ENCODE measurements at regions of chr21 and their contacts with region 1.

Region 1: GRCh38 chr21:39137248-39138178 is 45.7 kb downstream of the PSMG1 start:
- DNase-seq: no peak
- H3K4me3 Mint-ChIP-seq: no peak overlapping the region
- H3K27ac Mint-ChIP-seq: no peak overlapping the region
- H3K4me1 Mint-ChIP-seq: no peaks in the 10 kb centered on the region
- H3K27me3 Mint-ChIP-seq: peaks cover 2% of the 10 kb centered on the region

Region 2: DNA sequence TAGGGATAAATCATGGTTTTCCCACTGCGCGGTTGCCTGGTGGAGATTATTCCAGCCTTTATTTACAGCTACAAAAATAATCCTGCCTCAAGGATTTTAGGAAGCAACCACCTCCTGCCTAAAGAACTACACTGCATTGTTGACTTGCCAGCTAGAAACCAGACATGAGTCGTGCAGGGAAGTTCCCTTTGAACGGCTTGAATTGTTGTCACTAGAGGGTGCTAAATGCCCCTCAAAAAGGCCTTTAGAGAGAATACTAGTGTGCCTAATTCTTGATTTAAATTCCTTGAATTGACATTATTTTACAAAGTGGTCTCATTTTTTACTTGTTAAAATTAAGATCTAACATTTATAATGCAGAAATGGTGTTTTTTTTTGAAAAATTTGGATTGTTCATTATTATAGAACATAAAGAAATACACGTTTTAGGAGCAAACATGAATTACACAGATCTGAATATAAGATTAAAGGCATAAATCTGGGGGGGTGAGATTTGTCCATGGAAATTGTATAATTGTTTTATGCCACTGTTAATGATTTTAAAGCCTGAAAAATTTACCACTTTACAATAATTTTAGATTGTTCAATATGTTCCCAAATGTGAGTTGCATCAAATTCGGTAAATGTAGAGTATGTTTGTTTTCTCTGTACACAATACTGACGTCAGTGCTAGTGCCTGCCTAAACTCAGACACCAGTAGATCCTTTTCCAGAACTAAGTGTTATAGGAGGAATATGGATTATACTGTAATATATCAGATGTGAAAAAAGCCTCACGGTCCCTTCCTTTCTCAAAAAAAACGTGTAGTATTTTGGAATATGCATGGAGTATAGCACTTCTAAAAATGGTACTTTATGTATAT is 631.6 kb before region 1 on chr21:
- intact Hi-C with region 1: loop called (anchors 1 kb)
- DNase-seq: peak; percentile 81
- H3K4me3 Mint-ChIP-seq: no peak overlapping the region
- H3K27ac Mint-ChIP-seq: no peak overlapping the region
- H3K4me1 Mint-ChIP-seq: peaks cover 13% of the 10 kb centered on the region
- H3K27me3 Mint-ChIP-seq: peaks cover 19% of the 10 kb centered on the region

Region 3: DNA sequence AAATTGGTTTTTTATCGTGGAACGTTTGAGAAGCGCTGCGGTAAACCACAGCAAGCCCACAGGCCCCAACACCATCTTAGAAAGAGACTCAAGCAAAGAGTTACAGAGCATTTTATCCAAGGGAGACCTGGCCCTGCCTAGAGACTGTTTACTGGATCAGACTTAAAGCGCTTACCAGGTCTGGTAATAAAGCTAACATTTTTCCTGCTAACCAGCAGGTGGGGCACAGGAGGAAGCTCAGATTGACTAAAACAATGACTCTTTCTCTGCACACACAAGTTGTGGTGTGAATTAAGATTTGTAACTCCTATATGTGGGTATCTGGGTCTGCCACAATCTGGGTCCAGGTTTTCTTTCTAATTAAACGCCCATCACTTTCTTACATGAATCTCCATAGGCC is 468.3 kb before region 1 on chr21:
- intact Hi-C with region 1: loop called (anchors 2 kb)
- DNase-seq: peak; percentile 58
- H3K4me3 Mint-ChIP-seq: no peak overlapping the region
- H3K27ac Mint-ChIP-seq: no peak overlapping the region
- H3K4me1 Mint-ChIP-seq: no peaks in the 10 kb centered on the region
- H3K27me3 Mint-ChIP-seq: peaks cover 23% of the 10 kb centered on the region

Region 4: DNA sequence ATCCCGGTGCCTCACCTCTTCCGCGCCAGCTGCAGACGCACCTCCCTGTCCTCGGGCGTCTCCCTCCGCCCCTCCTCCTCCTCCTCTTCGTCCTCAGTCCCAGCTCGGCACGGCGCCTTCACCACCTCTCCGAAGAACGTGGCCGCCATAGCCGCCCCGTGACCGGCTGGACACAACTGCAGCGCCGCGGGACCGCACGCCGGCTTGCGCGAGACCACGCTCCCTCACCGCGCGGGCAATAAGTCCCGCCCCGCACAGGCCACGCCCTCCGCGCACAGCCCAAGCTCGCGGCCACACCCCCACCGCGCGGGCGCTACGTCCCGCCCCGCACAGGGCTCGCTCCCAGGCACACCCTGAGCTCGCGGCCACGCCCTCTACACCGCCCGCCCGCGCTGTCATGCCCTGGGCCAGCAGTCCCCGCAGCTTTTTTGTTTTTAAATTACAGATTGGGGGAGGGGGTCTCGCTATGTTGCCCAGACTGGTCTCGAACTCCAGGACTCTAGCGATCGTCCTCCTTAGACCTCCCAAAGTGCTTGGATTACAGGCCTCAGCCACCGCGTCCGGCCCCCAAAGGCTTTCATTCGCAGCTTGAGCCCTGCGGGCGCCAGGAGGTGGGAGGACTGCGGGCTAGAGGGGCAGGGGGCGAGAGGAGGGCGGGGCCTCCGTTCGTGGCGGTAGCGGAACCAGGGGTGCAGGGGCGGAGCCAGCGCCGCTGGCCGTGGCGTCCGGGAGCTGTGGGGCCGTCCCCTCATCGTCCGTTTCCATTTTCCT is 45.9 kb after region 1 on chr21 and contains the start of gene PSMG1:
- intact Hi-C with region 1: no loop called
- DNase-seq: peak; percentile 98
- H3K4me3 Mint-ChIP-seq: peak within 1 kb of the TSS; percentile 99
- H3K27ac Mint-ChIP-seq: peak within 1 kb of the TSS; percentile 98
- H3K4me1 Mint-ChIP-seq: peaks cover 47% of the 10 kb centered on the region
- H3K27me3 Mint-ChIP-seq: no peaks in the 10 kb centered on the region
- total RNA-seq, gene PSMG1: 99.7 and 105 TPM in 2 replicates

Region 5: GRCh38 chr21:39232861-39233291 is 95.4 kb after region 1 on chr21:
- intact Hi-C with region 1: no loop called
- DNase-seq: no peak
- H3K4me3 Mint-ChIP-seq: no peak overlapping the region
- H3K27ac Mint-ChIP-seq: no peak overlapping the region
- H3K4me1 Mint-ChIP-seq: peaks cover 6% of the 10 kb centered on the region
- H3K27me3 Mint-ChIP-seq: no peaks in the 10 kb centered on the region

Measured in activated CD4-positive, alpha-beta T cell treated with anti-CD3 and anti-CD28 coated beads, Interleukin-2, amount 10 ng/mL, durations not matched to agents 24 days and 14 days (primary cell).